Activated naive CD4-positive, alpha-beta T cell treated with anti-CD3 and anti-CD28 coated beads for 36 hours (primary cell): ENCODE measurements at regions of chr2 and their contacts with region 1.

Region 1: DNA sequence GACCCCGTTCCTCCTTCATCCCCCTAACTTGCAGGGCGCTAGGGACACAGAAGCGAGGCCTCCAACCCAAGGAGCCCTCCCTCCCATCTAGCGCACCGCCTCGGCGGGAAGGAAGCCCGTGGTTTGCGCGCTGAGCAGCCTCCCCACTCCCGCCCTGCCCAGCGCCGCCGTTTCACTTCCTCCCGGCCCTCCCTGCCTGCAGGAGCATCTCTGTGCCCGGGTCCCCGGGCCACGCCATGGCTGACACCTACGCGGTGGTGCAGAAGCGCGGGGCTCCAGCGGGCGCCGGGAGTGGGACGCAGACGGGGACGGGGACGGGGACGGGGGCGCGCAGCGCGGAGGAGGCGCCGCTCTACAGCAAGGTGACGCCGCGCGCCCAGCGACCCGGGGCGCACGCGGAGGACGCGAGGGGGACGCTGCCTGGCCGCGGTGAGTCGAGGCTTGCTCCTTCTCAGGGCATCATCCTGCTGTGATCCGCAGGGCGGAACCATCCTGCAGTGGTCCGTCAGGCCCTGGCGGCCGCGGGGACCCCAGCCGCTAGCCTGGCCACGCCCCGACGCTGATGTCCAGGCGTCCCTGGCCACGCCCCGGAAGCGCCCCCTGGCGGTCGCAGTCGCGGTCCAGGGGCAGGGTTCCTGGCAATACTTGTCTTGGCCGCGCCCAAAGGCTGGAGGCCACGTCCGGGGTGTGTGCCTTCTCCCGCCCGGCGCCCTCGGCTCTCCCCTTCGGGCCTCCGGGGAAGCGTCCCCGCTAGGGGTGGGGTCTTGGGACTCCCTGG is 16.4 kb downstream of the PTPN18 start:
- DNase-seq: peak; percentile 82
- H3K4me3 Mint-ChIP-seq: peak overlapping the region; percentile 86
- H3K27ac Mint-ChIP-seq: peak overlapping the region; percentile 93
- H3K4me1 Mint-ChIP-seq: peaks cover 46% of the 10 kb centered on the region
- H3K27me3 Mint-ChIP-seq: no peaks in the 10 kb centered on the region

Region 2: GRCh38 chr2:129957911-129958310 is 414.3 kb before region 1 on chr2:
- CTCF ChIA-PET with region 1: no interaction called
- intact Hi-C with region 1: no loop called
- DNase-seq: no peak
- H3K4me3 Mint-ChIP-seq: no peak overlapping the region
- H3K27ac Mint-ChIP-seq: no peak overlapping the region
- H3K4me1 Mint-ChIP-seq: no peaks in the 10 kb centered on the region
- H3K27me3 Mint-ChIP-seq: peaks cover 6% of the 10 kb centered on the region

Region 3: GRCh38 chr2:130181325-130181879 is 190.8 kb before region 1 on chr2 and contains the start of gene SMPD4:
- CTCF ChIA-PET with region 1: no interaction called
- intact Hi-C with region 1: loop called (anchors 1 kb)
- DNase-seq: peak; percentile 97
- H3K4me3 Mint-ChIP-seq: peak within 1 kb of the TSS; percentile 91
- H3K27ac Mint-ChIP-seq: peak within 1 kb of the TSS; percentile 94
- H3K4me1 Mint-ChIP-seq: peaks cover 31% of the 10 kb centered on the region
- H3K27me3 Mint-ChIP-seq: no peaks in the 10 kb centered on the region
- total RNA-seq, gene SMPD4: 70.8 to 71.5 TPM

Region 4: GRCh38 chr2:130355578-130356431 is 16.4 kb before region 1 on chr2 and contains the start of gene PTPN18:
- CTCF ChIA-PET with region 1: no interaction called
- intact Hi-C with region 1: loop called (anchors 1 kb)
- DNase-seq: peak; percentile 54
- H3K4me3 Mint-ChIP-seq: peak within 1 kb of the TSS; percentile 74
- H3K27ac Mint-ChIP-seq: no peak within 1 kb of the TSS
- H3K4me1 Mint-ChIP-seq: peaks cover 5% of the 10 kb centered on the region
- H3K27me3 Mint-ChIP-seq: no peaks in the 10 kb centered on the region
- total RNA-seq, gene PTPN18: 24.7 to 25.3 TPM

Region 5: GRCh38 chr2:130391058-130391871 is 19.0 kb after region 1 on chr2:
- CTCF ChIA-PET with region 1: interaction called, 8 read pairs
- intact Hi-C with region 1: loop called (anchors 1 kb)
- DNase-seq: peak; percentile 83
- H3K4me3 Mint-ChIP-seq: peak overlapping the region; percentile 71
- H3K27ac Mint-ChIP-seq: no peak overlapping the region
- H3K4me1 Mint-ChIP-seq: peaks cover 3% of the 10 kb centered on the region
- H3K27me3 Mint-ChIP-seq: peaks cover 15% of the 10 kb centered on the region

Region 6: GRCh38 chr2:130727286-130728018 is 355.2 kb after region 1 on chr2:
- CTCF ChIA-PET with region 1: no interaction called
- intact Hi-C with region 1: loop called (anchors 10 kb)
- DNase-seq: peak; percentile 92
- H3K4me3 Mint-ChIP-seq: peak overlapping the region; percentile 73
- H3K27ac Mint-ChIP-seq: peak overlapping the region; percentile 43
- H3K4me1 Mint-ChIP-seq: peaks cover 7% of the 10 kb centered on the region
- H3K27me3 Mint-ChIP-seq: no peaks in the 10 kb centered on the region

Region 7: GRCh38 chr2:130873700-130874346 is 501.6 kb after region 1 on chr2:
- CTCF ChIA-PET with region 1: no interaction called
- intact Hi-C with region 1: no loop called
- DNase-seq: peak; percentile 86
- H3K4me3 Mint-ChIP-seq: no peak overlapping the region
- H3K27ac Mint-ChIP-seq: no peak overlapping the region
- H3K4me1 Mint-ChIP-seq: no peaks in the 10 kb centered on the region
- H3K27me3 Mint-ChIP-seq: peaks cover 5% of the 10 kb centered on the region

Region 8: GRCh38 chr2:131105156-131105949 is 733.1 kb after region 1 on chr2 and contains the start of gene PLEKHB2:
- CTCF ChIA-PET with region 1: no interaction called
- intact Hi-C with region 1: loop called (anchors 10 kb)
- DNase-seq: peak; percentile 92
- H3K4me3 Mint-ChIP-seq: peak within 1 kb of the TSS; percentile 93
- H3K27ac Mint-ChIP-seq: peak within 1 kb of the TSS; percentile 98
- H3K4me1 Mint-ChIP-seq: peaks cover 40% of the 10 kb centered on the region
- H3K27me3 Mint-ChIP-seq: no peaks in the 10 kb centered on the region
- total RNA-seq, gene PLEKHB2: 43.4 to 43.9 TPM